Sigmoid colon (tissue), 7 donors: ENCODE measurements at regions of chrX and their contacts with region 1.

Region 1: GRCh38 chrX:136920001-136920400 is 39.5 kb upstream of the RBMX start:
- DNase-seq: no peak
- H3K4me3 ChIP-seq: no peak overlapping the region
- H3K27ac ChIP-seq: no peak overlapping the region
- H3K4me1 ChIP-seq: no peaks in the 10 kb centered on the region
- H3K27me3 ChIP-seq: no peaks in the 10 kb centered on the region
- CTCF ChIP-seq: no peak
- EP300 ChIP-seq: no peak
- POLR2A ChIP-seq: no peak

Region 2: DNA sequence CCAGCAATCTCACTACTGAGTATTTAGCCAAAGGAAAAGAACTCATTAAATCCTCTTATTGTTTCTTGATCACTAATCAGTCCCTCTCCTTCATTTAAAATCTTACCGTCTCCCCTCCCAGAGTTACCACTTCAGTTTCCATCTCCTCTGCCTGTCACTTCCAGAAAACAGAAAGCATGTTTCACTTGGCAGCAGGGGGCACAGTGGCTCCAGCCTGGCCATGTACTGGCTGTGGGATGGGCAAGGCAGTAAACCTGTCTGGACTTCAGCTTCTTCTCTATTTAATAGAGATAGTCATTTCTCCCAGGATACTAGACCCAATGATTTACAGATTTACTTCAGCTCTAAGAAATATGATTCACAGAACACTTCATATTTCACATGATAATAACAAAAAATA is 208.9 kb before region 1 on chrX:
- intact Hi-C with region 1: loop called (anchors 2 kb)
- DNase-seq: peak; percentile 67
- H3K4me3 ChIP-seq: no peak overlapping the region
- H3K27ac ChIP-seq: no peak overlapping the region
- H3K4me1 ChIP-seq: no peaks in the 10 kb centered on the region
- H3K27me3 ChIP-seq: no peaks in the 10 kb centered on the region
- CTCF ChIP-seq: peak in 1 of 4 experiments; percentile 20
- EP300 ChIP-seq: no peak
- POLR2A ChIP-seq: no peak

Region 3: DNA sequence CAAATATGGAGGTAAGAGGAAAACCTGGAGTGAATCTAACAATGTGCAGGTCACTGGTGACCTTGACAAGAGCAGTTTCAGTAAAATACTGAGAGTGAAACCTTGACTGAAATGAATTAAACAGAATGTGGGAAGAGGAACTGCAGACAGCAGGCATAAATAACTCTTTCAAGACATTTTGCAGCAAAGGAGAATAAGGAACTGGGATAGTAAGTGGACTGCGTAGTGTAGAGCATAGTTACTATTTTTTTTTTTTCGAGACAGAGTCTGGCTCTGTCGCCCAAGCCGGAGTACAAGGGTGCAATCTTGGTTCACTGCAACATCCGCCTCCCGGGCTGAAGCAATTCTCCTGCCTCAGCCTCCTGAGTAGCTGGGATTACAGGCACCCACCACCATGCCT is 63.5 kb before region 1 on chrX:
- intact Hi-C with region 1: no loop called
- DNase-seq: no peak
- H3K4me3 ChIP-seq: no peak overlapping the region
- H3K27ac ChIP-seq: no peak overlapping the region
- H3K4me1 ChIP-seq: no peaks in the 10 kb centered on the region
- H3K27me3 ChIP-seq: no peaks in the 10 kb centered on the region
- CTCF ChIP-seq: no peak
- EP300 ChIP-seq: no peak
- POLR2A ChIP-seq: no peak

Region 4: GRCh38 chrX:136880452-136881013 is 39.5 kb before region 1 on chrX and contains the start of gene RBMX:
- intact Hi-C with region 1: loop called (anchors 5 kb)
- DNase-seq: peak; percentile 97
- H3K4me3 ChIP-seq: peak within 1 kb of the TSS; percentile 66 to 78 (median 74)
- H3K27ac ChIP-seq: peak within 1 kb of the TSS; percentile 93 to 95 (median 94)
- H3K4me1 ChIP-seq: peaks cover 0 to 13% (median 3%) of the 10 kb centered on the region in 4 donors
- H3K27me3 ChIP-seq: no peaks in the 10 kb centered on the region
- CTCF ChIP-seq: no peak
- EP300 ChIP-seq: no peak
- POLR2A ChIP-seq: peak; percentile 97 to 98
- total RNA-seq, gene RBMX: 173 to 334 (median 243) TPM